Caco-2 (cell line): ENCODE measurements at regions of chr11 and their contacts with region 1.

Region 1: DNA sequence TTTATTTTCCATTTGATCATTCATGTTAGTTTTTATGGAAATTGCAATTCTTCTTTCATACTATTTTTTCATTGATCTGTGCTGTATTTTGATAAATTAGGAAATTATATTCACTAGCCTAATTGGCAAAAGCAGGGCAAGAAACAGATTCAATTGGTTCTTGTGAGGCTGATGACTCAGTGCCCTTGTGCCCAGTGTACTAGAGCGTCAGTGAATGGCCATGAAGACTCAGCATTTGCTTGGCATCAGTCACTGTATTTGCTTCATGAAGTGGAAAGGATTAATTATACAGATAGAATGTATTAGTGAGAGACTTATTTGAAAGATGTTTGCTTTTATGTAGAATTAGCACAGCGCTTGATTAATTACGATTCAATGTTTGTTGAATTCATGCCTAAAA is 31.8 kb downstream of the MRGPRX1 start:
- DNase-seq: no peak
- H3K4me3 ChIP-seq: no peak overlapping the region
- H3K4me3 Mint-ChIP-seq: no peak overlapping the region
- H3K27ac Mint-ChIP-seq: no peak overlapping the region
- H3K4me1 ChIP-seq: peaks cover 4% of the 10 kb centered on the region
- H3K4me1 Mint-ChIP-seq: peaks cover 6% of the 10 kb centered on the region
- H3K27me3 ChIP-seq: no peaks in the 10 kb centered on the region
- H3K27me3 Mint-ChIP-seq: no peaks in the 10 kb centered on the region
- CTCF ChIP-seq: no peak

Region 2: DNA sequence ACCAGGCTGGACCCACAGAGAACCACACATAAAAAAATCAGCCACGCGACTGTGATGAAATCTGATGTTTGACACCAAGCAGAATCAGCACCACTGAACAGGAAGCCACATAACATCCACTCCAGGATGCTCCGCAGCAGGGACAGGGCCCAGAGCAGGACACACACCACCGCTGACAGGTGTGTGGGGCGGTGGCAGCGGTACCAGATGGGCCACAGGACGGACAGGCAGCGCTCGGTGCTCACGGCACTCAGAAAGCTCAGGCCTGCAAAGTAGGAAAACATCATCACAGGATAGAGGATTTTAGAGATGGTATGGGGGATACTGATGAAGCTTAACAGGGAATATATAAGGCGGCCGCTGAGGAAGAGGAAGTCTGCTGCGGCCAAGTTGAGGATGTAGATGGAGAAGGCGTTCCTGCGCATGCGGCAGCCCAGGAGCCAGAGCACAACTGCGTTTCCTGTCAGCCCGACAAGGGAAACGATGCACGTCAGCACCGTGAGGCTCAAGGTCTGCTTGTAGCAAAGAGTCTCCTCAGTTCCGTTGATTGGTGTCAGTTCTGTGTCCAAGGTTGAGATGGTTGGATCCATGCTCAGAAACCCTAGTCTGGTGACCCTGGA is 26.9 kb after region 1 on chr11:
- CTCF ChIA-PET with region 1: no interaction called
- POLR2A ChIA-PET with region 1: no interaction called
- intact Hi-C with region 1: no loop called
- DNase-seq: no peak
- H3K4me3 ChIP-seq: no peak overlapping the region
- H3K4me3 Mint-ChIP-seq: no peak overlapping the region
- H3K27ac Mint-ChIP-seq: no peak overlapping the region
- H3K4me1 ChIP-seq: peaks cover 16% of the 10 kb centered on the region
- H3K4me1 Mint-ChIP-seq: no peaks in the 10 kb centered on the region
- H3K27me3 ChIP-seq: no peaks in the 10 kb centered on the region
- H3K27me3 Mint-ChIP-seq: no peaks in the 10 kb centered on the region
- CTCF ChIP-seq: no peak

Region 3: DNA sequence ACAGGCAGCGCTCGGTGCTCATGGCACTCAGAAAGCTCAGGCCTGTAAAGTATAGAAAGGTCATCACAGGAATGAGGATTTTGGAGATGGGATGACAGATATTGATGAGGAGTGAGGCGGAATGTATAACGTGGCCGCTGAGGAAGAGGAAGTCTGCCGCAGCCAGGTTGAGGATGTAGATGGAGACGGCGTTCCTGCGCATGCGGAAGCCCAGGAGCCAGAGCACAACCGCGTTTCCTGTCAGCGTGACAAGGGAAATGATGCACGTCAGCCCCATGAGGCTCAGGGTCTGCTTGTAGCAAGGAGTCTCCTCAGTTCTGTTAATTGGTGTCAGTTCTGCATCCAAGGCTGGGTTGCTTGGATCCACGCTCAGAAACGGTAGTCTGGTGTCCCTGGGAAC is 64.9 kb after region 1 on chr11:
- CTCF ChIA-PET with region 1: no interaction called
- POLR2A ChIA-PET with region 1: no interaction called
- intact Hi-C with region 1: loop called (anchors 5 kb)
- DNase-seq: no peak
- H3K4me3 ChIP-seq: no peak overlapping the region
- H3K4me3 Mint-ChIP-seq: no peak overlapping the region
- H3K27ac Mint-ChIP-seq: peak overlapping the region; percentile 10
- H3K4me1 ChIP-seq: peaks cover 13% of the 10 kb centered on the region
- H3K4me1 Mint-ChIP-seq: peaks cover 13% of the 10 kb centered on the region
- H3K27me3 ChIP-seq: no peaks in the 10 kb centered on the region
- H3K27me3 Mint-ChIP-seq: no peaks in the 10 kb centered on the region
- CTCF ChIP-seq: no peak

Region 4: GRCh38 chr11:19040051-19040450 is 132.7 kb after region 1 on chr11:
- CTCF ChIA-PET with region 1: no interaction called
- POLR2A ChIA-PET with region 1: no interaction called
- intact Hi-C with region 1: no loop called
- DNase-seq: no peak
- H3K4me3 ChIP-seq: no peak overlapping the region
- H3K4me3 Mint-ChIP-seq: no peak overlapping the region
- H3K27ac Mint-ChIP-seq: no peak overlapping the region
- H3K4me1 ChIP-seq: no peaks in the 10 kb centered on the region
- H3K4me1 Mint-ChIP-seq: peaks cover 6% of the 10 kb centered on the region
- H3K27me3 ChIP-seq: no peaks in the 10 kb centered on the region
- H3K27me3 Mint-ChIP-seq: peaks cover 7% of the 10 kb centered on the region
- CTCF ChIP-seq: no peak